Ovary (tissue), 10 donors: ENCODE measurements at regions of chr20 and their contacts with region 1.

Region 1: DNA sequence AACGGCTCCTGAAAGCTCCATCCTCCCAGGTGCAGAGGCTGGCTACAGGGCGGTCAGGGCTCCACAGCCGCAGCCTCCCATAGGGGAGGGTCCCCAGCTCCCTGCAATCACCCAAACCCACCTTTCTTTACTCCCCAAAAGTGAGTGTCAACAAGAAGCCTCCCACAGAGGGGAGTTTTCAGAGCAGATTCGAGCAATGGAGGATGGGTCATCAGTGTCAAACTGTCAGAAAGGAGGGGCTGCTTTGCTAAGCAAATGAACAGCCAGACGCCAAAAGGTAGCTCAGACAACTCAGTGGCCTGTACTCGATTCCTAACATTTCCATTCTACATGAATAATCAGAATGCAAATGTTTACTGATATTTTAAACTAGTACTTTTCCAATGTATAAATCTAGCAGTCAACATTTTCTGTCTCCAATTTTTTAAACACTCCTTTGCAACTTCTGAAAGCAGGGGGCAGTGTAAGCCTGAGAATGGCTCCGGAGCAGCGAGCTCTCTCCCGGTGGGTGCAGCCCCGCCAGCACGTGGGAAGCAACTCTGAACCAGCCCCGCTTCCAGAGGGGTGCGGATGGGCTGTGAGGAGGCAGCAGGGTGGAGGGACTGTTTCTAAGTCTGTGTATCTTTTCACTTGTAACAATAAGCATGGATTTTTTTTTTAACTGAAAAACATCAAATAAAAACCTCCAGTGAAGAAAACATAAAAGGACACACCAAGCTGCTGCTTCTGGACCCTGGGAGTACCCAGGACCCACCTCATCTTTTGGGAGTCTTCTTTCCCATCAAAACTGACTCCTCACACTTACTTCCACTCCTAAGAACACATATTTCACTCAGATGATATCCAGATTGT is 54.9 kb downstream of the TAF4 start:
- DNase-seq: peak; percentile 54 to 72 (median 70)
- H3K4me3 ChIP-seq: no peak overlapping the region
- H3K27ac ChIP-seq: no peak overlapping the region
- H3K4me1 ChIP-seq: peaks cover 2% of the 10 kb centered on the region
- H3K27me3 ChIP-seq: no peaks in the 10 kb centered on the region
- CTCF ChIP-seq: peak; percentile 32 to 68 (median 60)
- EP300 ChIP-seq: no peak
- POLR2A ChIP-seq: no peak

Region 2: GRCh38 chr20:62156592-62157386 is 146.0 kb after region 1 on chr20:
- intact Hi-C with region 1: loop called in 1 of 4 experiments (anchors 5 kb)
- DNase-seq: peak; percentile 48 to 76 (median 67)
- H3K4me3 ChIP-seq: no peak overlapping the region
- H3K27ac ChIP-seq: no peak overlapping the region
- H3K4me1 ChIP-seq: peaks cover 6% of the 10 kb centered on the region
- H3K27me3 ChIP-seq: no peaks in the 10 kb centered on the region
- CTCF ChIP-seq: peak; percentile 35 to 51 (median 43)
- EP300 ChIP-seq: no peak
- POLR2A ChIP-seq: no peak